Esophagus muscularis mucosa (tissue), 4 donors: ENCODE measurements at regions of chr11 and their contacts with region 1.

Region 1: DNA sequence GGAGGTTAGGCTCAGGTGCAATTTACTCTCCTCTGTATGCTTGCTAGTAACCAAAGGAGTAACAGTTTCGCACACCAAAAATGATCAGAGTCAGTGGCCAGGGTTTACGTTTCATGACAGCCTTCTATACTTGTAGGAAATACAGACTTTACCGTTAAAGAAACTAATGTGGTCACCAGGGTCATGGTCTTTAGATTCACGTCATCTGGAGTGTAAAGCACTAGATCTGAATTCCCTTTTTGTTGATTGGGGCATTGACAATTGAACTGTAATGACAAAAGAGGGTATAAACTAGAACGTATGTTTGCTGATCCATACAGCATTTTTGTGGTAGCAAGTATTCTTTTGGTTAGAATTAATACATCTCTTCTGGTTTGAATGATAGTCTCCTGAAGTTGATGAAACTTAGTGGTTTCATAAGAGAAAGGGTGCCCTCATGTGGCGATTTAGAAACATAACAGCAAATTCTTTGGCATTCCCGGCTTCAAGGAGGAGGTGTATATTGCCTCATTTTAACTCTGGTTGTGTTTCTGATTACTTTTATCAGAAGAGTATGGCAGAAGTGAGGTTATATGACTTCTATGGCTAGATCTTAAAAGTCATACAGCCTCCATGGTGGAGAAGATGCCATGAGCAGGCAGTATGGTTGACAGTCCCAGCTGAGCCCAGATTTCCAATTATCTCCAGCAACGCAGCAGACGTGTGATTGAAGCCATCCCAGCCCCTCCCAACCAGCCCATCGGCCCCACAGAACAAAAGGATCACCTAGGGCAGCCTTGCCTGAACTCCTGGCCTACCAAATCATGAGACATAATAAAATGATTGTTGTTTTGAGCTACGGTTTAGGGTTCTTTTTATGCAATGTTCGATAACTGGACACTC is 35.1 kb downstream of the MMP7 start:
- DNase-seq: no peak
- H3K4me3 ChIP-seq: no peak overlapping the region
- H3K27ac ChIP-seq: no peak overlapping the region
- H3K4me1 ChIP-seq: peaks cover 0 to 15% (median 5%) of the 10 kb centered on the region in 4 donors
- H3K27me3 ChIP-seq: no peaks in the 10 kb centered on the region
- CTCF ChIP-seq: peak; percentile 68 to 72 (median 72)
- EP300 ChIP-seq: no peak
- POLR2A ChIP-seq: no peak

Region 2: DNA sequence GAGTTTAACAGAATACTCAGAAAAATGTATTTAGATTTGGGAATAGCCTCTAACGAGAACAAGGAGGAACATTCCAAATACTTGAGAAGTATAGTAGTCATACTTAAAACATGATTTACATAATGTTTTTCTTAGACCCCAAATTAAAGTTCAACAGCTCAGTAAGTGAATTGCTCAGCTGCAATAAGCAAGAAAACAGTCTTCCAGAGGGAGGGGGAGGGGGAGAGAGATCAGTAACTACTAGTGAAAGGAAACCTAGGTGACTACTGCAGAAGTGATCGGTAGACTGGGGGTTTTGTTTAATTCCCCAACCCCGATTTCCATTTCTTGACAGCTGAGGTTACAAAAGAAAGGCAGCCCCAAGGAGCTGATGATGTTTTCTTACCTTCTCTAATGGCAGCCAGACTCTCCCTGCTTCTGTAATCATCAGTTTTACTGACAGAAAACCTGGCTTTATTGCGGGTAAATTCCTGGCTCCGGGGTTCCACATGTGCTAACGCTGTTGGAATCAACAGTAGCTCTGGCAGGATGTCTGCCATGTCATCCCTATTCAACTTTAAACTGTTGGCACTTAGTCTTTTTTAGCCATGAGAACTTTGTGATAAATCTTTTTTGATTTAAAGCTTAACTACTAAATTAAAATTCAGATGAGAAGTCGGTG is 260.5 kb before region 1 on chr11:
- intact Hi-C with region 1: no loop called
- DNase-seq: no peak
- H3K4me3 ChIP-seq: no peak overlapping the region
- H3K27ac ChIP-seq: peak overlapping the region in 1 of 4 donors; percentile 21
- H3K4me1 ChIP-seq: peaks cover 0 to 18% (median 15%) of the 10 kb centered on the region in 4 donors
- H3K27me3 ChIP-seq: no peaks in the 10 kb centered on the region
- CTCF ChIP-seq: no peak
- EP300 ChIP-seq: no peak
- POLR2A ChIP-seq: no peak

Region 3: DNA sequence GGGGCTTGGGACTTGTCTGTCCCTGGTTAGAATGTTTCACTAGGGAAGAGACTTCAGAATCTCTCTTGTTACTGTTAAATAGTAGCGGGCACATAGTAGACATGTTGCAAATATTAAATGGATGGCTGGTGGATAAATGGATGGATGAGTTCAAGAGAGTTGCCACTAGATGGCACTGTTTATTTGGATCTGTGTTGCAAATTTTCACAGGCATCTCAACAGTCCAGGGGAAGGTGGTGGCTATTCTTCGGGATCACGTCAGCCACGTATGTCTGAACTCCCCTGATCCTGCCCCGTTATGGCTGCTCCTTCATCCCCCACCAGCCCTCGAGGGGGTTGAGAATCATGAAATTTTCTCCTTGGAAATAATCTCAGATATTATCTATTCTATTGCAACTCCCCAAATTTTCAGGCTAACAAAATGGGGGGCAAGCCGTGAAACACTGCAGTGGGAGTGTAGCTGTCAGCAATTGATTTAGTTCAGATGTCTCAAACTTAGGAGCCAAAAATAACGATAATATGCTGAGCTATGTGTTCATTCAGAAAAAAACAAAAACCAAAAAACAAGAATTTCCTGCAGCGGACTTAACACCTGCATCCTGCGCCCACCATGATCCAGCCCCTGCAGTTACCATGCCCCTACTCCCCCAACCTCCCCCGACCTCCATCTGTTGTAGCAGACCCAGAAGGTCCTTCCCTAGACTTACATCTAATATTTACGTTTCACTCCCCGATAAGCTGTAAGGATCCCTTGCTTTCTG is 207.3 kb before region 1 on chr11:
- intact Hi-C with region 1: loop called (anchors 5 kb)
- DNase-seq: no peak
- H3K4me3 ChIP-seq: peak overlapping the region; percentile 26 to 41 (median 32)
- H3K27ac ChIP-seq: no peak overlapping the region
- H3K4me1 ChIP-seq: peaks cover 0 to 23% (median 20%) of the 10 kb centered on the region in 4 donors
- H3K27me3 ChIP-seq: no peaks in the 10 kb centered on the region
- CTCF ChIP-seq: peak; percentile 71 to 83 (median 79)
- EP300 ChIP-seq: no peak
- POLR2A ChIP-seq: no peak

Region 4: DNA sequence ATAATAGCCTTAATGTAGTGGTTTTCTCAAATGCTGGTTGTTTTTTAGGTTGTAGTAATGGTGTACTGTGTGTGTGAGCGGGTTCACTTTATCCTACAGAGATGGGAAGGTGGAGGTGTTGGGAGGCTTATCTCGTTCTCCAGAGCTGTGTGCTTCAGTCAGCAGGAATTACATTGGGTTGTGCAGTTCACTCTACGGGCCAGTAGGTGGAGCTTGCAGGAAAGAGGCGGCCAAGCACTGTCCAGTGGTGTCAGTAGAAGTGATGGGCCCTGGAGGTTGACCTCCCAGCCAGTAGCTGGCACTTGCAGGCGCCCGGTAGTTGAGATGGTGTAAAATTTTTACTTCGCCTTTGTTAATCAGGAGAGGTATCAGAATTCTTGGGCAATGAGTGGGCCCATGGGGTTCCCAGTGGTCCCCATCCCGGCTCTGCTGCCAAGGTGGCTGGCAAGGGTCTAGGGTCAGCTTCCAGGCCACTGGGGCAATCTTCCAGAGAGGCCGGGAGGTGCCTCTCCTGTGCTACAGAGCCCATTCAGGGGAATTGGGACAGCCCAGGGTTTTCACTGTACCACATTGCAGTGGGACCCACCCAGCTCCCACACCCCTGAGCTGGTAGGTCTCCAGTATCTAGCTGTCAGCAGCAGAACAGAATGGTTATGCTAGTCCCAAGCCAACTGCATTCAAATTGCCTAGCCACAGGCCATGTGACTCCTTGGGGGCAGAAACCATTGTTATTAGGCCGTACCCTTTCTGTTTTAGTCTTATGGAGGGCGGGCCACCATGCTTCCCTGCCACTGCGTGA is 104.5 kb before region 1 on chr11:
- intact Hi-C with region 1: loop called (anchors 5 kb)
- DNase-seq: no peak
- H3K4me3 ChIP-seq: no peak overlapping the region
- H3K27ac ChIP-seq: no peak overlapping the region
- H3K4me1 ChIP-seq: peaks cover 0 to 9% (median 4%) of the 10 kb centered on the region in 4 donors
- H3K27me3 ChIP-seq: no peaks in the 10 kb centered on the region
- CTCF ChIP-seq: peak; percentile 70 to 97 (median 77)
- EP300 ChIP-seq: no peak
- POLR2A ChIP-seq: no peak

Region 5: DNA sequence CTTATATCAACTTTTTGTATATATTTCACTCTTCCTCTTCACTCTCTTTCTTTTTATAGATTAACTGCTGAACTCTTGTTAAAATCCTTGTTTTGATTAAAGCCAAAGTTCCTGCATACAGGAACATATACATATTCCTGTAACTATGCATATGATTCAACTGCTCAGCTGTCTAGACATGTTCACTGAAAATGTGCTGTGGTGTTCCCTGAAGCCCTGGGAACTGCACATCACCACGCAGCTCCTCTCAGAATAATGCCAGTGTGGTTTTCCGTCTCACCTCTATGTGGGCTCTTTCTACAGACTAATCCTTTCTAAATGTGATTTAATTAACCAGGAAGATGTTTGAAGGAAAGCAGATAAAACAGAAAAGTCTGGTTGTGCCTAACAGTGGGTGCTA is 404.9 kb after region 1 on chr11:
- intact Hi-C with region 1: no loop called
- DNase-seq: no peak
- H3K4me3 ChIP-seq: no peak overlapping the region
- H3K27ac ChIP-seq: no peak overlapping the region
- H3K4me1 ChIP-seq: no peaks in the 10 kb centered on the region
- H3K27me3 ChIP-seq: peaks cover 0 to 3% (median 0%) of the 10 kb centered on the region in 4 donors
- CTCF ChIP-seq: no peak
- EP300 ChIP-seq: no peak
- POLR2A ChIP-seq: no peak